ENCODE measurements at regions of chr10 and their contacts with region 1.

Region 1: DNA sequence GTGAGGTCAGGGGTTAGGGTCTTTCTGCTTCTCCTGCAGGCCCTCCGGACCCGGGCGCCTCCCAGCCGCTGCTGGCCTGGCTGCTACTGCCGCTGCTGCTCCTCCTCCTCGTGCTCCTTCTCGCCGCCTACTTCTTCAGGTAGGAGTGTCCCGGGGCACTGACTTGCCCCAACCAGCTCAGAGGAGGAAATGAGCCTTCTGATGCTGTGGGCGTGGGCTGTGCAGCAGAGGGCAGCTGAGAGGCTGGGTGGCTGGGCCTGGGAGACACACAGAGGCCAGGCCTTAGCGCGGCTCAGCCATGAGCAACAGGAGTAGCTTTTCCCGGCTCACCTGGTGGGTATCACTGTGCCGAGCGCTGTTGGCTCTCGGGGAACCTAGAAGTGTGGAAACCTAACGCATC is 78.9 kb downstream of the MKI67 start:
- DNase-seq: peak; percentile 93
- ATAC-seq: peak; percentile 100
- H3K4me3 Mint-ChIP-seq: peak overlapping the region; percentile 84
- H3K27ac Mint-ChIP-seq: peak overlapping the region; percentile 93
- H3K4me1 Mint-ChIP-seq: peaks cover 53% of the 10 kb centered on the region
- H3K27me3 Mint-ChIP-seq: no peaks in the 10 kb centered on the region

Region 2: DNA sequence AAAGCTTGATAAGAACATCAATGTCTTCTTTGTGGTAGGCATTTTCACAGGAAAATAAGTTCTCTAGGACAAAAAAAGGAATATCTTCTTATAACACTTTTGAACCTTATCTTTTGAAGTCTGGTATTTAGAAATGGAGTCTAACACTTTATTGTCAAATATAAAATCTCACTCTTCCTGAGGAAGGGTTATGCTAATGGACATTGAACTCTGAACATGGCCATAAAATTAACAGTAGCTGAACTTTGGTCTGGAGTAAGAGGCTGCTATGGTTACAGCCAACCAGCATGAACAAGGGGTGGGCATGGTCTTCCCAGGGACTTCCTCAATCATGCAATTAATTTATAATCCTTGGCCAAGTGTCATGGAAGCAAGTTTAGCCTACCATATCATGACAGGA is 154.6 kb before region 1 on chr10 and contains the start of gene CLRN3:
- CTCF ChIA-PET with region 1: no interaction called
- POLR2A ChIA-PET with region 1: no interaction called
- DNase-seq: no peak
- ATAC-seq: no peak
- H3K4me3 Mint-ChIP-seq: no peak within 1 kb of the TSS
- H3K27ac Mint-ChIP-seq: no peak within 1 kb of the TSS
- H3K4me1 Mint-ChIP-seq: peaks cover 3% of the 10 kb centered on the region
- H3K27me3 Mint-ChIP-seq: peaks cover 19% of the 10 kb centered on the region
- total RNA-seq, gene CLRN3: not detected

Region 3: DNA sequence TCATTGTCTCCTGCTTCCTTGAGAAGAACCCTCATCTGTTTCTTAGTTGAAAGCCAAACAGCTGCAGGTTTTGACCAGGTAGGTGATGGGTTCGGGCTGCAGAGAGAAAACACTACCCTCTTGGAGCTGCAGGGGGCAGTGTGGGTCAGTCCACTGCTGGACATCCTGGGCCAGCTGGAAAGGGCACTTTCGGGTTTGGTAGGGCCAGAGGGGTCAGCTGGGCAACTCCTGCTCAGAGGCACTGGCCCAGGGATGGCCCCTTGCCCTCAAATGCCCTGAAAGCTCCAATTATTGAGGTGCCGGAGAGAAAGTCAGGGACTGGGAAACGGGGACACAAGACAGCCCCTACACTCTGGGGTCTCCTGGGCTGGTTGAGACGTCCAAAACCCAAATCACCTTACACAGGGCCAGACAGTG is 11.8 kb before region 1 on chr10:
- CTCF ChIA-PET with region 1: interaction called, 87 read pairs
- POLR2A ChIA-PET with region 1: interaction called, 9 read pairs
- DNase-seq: peak; percentile 73
- ATAC-seq: peak; percentile 81
- H3K4me3 Mint-ChIP-seq: no peak overlapping the region
- H3K27ac Mint-ChIP-seq: no peak overlapping the region
- H3K4me1 Mint-ChIP-seq: peaks cover 11% of the 10 kb centered on the region
- H3K27me3 Mint-ChIP-seq: no peaks in the 10 kb centered on the region

Region 4: GRCh38 chr10:128064108-128064969 is 17.0 kb after region 1 on chr10:
- CTCF ChIA-PET with region 1: interaction called, 65 read pairs
- POLR2A ChIA-PET with region 1: interaction called, 145 read pairs
- DNase-seq: peak; percentile 81
- ATAC-seq: peak; percentile 54
- H3K4me3 Mint-ChIP-seq: peak overlapping the region; percentile 78
- H3K27ac Mint-ChIP-seq: peak overlapping the region; percentile 85
- H3K4me1 Mint-ChIP-seq: peaks cover 78% of the 10 kb centered on the region
- H3K27me3 Mint-ChIP-seq: no peaks in the 10 kb centered on the region

Region 5: GRCh38 chr10:128125944-128126764 is 78.8 kb after region 1 on chr10 and contains the start of gene MKI67:
- CTCF ChIA-PET with region 1: no interaction called
- POLR2A ChIA-PET with region 1: interaction called, 12 read pairs
- DNase-seq: peak; percentile 96
- ATAC-seq: peak; percentile 90
- H3K4me3 Mint-ChIP-seq: peak within 1 kb of the TSS; percentile 95
- H3K27ac Mint-ChIP-seq: peak within 1 kb of the TSS; percentile 93
- H3K4me1 Mint-ChIP-seq: peaks cover 40% of the 10 kb centered on the region
- H3K27me3 Mint-ChIP-seq: peaks cover 2% of the 10 kb centered on the region
- total RNA-seq, gene MKI67: 356 to 368 TPM

Region 6: DNA sequence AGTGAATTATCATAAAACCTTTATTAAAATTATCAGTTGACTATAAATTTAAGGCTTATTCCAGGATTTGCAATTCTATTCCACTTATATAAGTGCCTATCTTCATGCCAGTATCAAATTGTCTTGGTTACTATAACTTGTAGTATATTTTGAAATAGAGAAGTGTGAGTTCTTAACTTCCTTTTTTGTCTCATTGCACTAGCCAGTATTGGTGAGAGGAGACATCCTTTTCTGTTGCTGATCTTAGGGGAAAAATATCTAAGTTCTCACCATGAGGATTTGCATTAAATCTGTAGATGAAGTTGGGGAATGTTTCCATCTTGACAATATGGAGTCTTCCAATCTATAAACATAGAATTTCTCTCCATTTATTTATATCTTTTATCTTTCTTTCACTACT is 183.1 kb after region 1 on chr10:
- CTCF ChIA-PET with region 1: no interaction called
- POLR2A ChIA-PET with region 1: no interaction called
- DNase-seq: no peak
- ATAC-seq: no peak
- H3K4me3 Mint-ChIP-seq: no peak overlapping the region
- H3K27ac Mint-ChIP-seq: no peak overlapping the region
- H3K4me1 Mint-ChIP-seq: no peaks in the 10 kb centered on the region
- H3K27me3 Mint-ChIP-seq: peaks cover 21% of the 10 kb centered on the region

Measured in activated CD8-positive, alpha-beta T cell treated with anti-CD3 and anti-CD28 coated beads, Interleukin-2, amount 10 ng/mL, durations not matched to agents 7 days and 5 days (primary cell).